Ascending aorta (tissue), 2 donors: ENCODE measurements at regions of chr2 and their contacts with region 1.

Region 1: GRCh38 chr2:20635675-20636584 is 15.0 kb downstream of the HS1BP3 start:
- DNase-seq: peak in 1 of 2 donors; percentile 94
- H3K4me3 ChIP-seq: peak overlapping the region in 1 of 2 donors; percentile 40
- H3K27ac ChIP-seq: peak overlapping the region; percentile 68 to 99
- H3K4me1 ChIP-seq: peaks cover 31 to 65% of the 10 kb centered on the region in 2 donors
- H3K27me3 ChIP-seq: no peaks in the 10 kb centered on the region
- CTCF ChIP-seq: peak; percentile 94 to 98 (median 96)

Region 2: GRCh38 chr2:18991177-18992168 is 1644.5 kb before region 1 on chr2:
- intact Hi-C with region 1: no loop called
- DNase-seq: peak in 1 of 2 donors; percentile 79
- H3K4me3 ChIP-seq: no peak overlapping the region
- H3K27ac ChIP-seq: peak overlapping the region; percentile 17 to 62
- H3K4me1 ChIP-seq: peaks cover 0 to 20% of the 10 kb centered on the region in 2 donors
- H3K27me3 ChIP-seq: no peaks in the 10 kb centered on the region
- CTCF ChIP-seq: no peak

Region 3: DNA sequence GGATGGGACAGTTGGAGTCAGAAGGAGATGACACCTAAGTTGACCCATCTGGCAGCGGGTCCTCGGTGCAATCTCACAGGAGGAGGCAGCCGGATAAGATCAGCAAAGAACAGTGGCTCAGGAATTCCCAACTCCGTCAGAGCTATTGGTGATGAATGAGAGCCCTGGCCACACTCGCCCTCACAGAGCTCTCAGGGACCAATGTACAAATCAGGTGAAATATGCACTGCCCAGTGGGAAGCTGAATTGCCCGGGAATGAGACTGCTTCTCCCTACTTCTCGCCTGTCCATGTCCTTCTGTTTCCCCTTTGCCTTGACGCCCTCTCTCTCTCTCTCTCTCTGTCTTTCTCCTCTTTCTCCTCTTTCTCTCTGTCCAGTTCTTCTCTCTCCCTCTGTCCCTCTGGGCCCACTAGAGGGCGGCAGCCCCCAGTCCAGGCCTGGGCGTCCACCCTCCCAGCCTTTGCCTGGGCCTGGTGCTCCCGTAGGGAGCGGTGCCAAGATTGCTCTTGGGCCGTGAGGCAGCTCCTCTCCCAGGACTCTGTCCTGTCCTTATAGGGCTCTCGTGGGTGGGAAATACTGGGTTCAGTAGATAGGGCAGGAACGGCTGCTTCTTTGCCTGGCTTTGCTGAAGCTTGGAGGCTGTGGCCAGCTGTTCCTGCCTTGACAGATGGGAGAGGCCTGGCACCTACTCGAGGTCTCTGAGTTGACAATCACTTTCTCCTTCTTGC is 257.0 kb before region 1 on chr2:
- intact Hi-C with region 1: loop called (anchors 2 kb)
- DNase-seq: peak; percentile 44 to 92
- H3K4me3 ChIP-seq: no peak overlapping the region
- H3K27ac ChIP-seq: peak overlapping the region; percentile 4 to 54
- H3K4me1 ChIP-seq: peaks cover 0 to 6% of the 10 kb centered on the region in 2 donors
- H3K27me3 ChIP-seq: no peaks in the 10 kb centered on the region
- CTCF ChIP-seq: peak; percentile 75 to 93 (median 80)

Region 4: DNA sequence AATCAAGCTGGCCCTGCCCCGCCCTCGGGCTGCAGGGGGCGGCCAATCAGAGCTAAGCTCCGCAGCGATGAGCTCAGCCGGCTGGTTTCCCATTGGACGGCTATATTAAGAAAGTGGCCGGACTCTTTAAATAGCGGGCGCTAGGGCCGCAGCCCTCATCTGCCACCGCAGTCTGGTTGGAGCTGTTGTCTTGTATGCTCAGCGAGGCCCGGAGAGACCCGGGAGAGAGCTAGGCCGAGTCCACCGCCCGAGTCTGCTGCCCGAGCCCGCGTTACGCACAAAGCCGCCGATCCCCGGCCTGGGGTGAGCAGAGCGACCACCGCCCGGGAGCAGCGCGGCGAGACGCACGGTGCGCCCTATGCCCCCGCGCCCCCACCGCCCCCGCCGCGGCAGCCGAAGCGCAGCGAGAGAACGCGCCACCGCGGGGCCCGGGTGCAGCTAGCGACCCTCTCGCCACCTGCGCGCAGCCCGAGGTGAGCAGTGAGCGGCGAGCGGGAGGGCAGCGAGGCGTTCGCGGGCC is 189.0 kb before region 1 on chr2 and contains the start of gene RHOB:
- intact Hi-C with region 1: loop called (anchors 1 kb)
- DNase-seq: peak; percentile 91 to 99
- H3K4me3 ChIP-seq: peak within 1 kb of the TSS; percentile 80 to 95
- H3K27ac ChIP-seq: peak within 1 kb of the TSS; percentile 90 to 96
- H3K4me1 ChIP-seq: peaks cover 3 to 12% of the 10 kb centered on the region in 2 donors
- H3K27me3 ChIP-seq: no peaks in the 10 kb centered on the region
- CTCF ChIP-seq: no peak
- total RNA-seq, gene RHOB: 3,143 TPM

Region 5: DNA sequence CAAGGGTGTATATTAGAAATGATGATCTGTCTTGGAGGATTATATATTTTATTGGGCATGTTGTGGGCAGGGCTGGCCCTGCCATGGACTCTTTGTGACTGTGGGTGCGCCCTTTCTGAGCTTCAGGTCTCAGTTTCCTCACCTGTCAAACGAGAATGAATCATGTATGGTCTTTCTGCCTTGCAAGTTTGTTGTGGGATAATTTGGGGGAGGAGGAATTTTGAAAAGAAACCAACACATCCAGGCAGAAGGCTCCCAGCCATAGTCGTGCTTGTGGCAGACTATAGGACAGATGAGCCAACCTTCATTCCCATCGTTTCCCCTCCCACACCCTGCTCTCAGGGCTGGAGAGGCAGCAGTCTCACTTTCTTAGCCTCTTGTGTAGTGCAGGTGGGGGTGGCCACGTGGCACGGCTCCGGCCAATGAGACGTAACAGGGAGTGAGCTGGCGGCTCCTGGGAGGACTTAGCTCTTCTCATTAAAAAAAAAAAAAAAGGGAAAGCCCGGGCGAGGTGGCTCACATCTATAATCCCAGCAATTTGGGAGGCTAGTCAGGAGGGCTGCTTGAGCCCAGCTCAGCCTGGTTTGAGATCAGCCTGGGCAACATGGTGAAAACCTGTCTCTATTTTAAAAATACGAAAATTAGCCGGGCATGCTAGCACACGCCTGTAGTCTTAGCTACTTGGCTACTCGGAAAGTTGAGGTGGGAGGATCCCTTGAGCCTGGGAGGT is 126.0 kb before region 1 on chr2:
- intact Hi-C with region 1: loop called (anchors 5 kb)
- DNase-seq: no peak
- H3K4me3 ChIP-seq: no peak overlapping the region
- H3K27ac ChIP-seq: no peak overlapping the region
- H3K4me1 ChIP-seq: no peaks in the 10 kb centered on the region
- H3K27me3 ChIP-seq: no peaks in the 10 kb centered on the region
- CTCF ChIP-seq: no peak

Region 6: GRCh38 chr2:20578895-20579825 is 56.8 kb before region 1 on chr2:
- intact Hi-C with region 1: loop called (anchors 2 kb)
- DNase-seq: peak; percentile 68 to 95
- H3K4me3 ChIP-seq: peak overlapping the region in 1 of 2 donors; percentile 7
- H3K27ac ChIP-seq: peak overlapping the region; percentile 86 to 90
- H3K4me1 ChIP-seq: peaks cover 13 to 35% of the 10 kb centered on the region in 2 donors
- H3K27me3 ChIP-seq: no peaks in the 10 kb centered on the region
- CTCF ChIP-seq: no peak

Region 7: GRCh38 chr2:20617892-20618467 is 17.9 kb before region 1 on chr2:
- intact Hi-C with region 1: loop called (anchors 1 kb)
- DNase-seq: peak; percentile 94 to 99
- H3K4me3 ChIP-seq: peak overlapping the region in 1 of 2 donors; percentile 7
- H3K27ac ChIP-seq: peak overlapping the region; percentile 97 to 98
- H3K4me1 ChIP-seq: peaks cover 51 to 59% of the 10 kb centered on the region in 2 donors
- H3K27me3 ChIP-seq: no peaks in the 10 kb centered on the region
- CTCF ChIP-seq: peak; percentile 49 to 76 (median 54)